MCF 10A (cell line): ENCODE measurements at regions of chr20 and their contacts with region 1.

Region 1: DNA sequence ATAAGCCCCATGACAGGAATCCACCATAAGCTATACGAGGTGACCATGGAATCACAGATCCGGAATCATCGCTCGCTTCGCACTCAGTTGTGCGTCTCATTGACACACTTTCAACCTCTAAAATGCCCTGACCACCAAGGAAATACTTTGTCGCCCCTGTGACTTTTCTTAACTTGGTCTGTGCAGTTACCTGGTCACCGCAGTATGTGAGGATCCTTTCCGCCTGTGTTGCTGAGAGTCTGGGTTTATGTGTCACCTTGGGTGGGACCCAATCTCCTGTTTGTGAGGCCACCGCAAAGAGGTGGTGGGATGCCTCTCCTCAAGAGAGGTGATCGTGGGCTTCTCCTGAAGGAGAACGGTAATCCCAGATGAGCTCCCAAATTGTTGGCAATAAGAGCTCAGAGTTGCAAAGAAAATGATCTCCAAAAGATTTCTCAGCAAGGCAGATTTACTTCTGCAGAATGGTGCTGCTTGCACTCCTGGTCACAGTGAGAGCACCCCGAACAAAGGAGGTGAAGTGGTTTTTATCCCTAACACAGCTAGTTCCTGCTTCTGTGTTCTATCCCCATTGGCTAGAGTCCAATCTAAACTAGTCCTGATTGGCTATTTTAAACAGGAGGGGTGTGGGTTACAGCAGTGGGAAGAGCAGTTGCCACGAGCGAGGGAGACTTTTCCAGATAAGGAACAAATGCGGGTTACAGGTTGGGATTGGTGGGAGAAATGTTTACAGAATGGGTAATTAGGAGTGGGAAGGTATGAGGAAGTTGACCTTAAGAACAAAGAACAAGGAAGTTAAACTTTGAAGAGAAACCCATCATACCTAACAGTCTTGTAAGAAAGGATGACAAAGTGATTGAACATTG is 9.1 kb upstream of the ZNFX1 start:
- DNase-seq: peak; percentile 23
- H3K4me3 Mint-ChIP-seq: peak overlapping the region; percentile 37
- H3K27ac Mint-ChIP-seq: no peak overlapping the region
- H3K4me1 Mint-ChIP-seq: peaks cover 67% of the 10 kb centered on the region
- H3K27me3 Mint-ChIP-seq: no peaks in the 10 kb centered on the region
- CTCF ChIP-seq: no peak

Region 2: DNA sequence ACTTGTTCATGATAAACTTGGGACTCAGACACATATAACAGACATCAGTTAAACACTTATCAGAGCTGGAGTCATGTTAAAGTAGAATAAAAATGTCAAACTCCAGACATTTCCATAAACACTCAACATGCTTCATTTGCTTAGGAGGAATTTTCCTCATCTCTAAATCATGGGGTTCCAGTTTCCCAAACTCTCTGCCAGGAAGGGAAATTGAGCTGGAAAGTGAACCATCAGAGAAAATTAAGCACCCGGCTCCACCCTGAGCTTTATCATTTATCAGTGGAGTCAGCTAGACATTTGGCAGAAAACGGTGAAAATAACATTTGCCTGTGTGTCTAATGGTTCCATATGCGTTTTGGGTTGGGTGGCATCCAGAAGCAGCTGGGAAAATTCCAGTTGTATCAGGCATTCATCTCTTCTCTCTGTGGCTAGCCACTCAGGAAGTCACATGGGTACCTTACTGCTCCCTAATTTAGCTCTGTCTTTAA is 16.2 kb after region 1 on chr20:
- CTCF ChIA-PET with region 1: interaction called, 3 read pairs
- POLR2A ChIA-PET with region 1: interaction called, 21 read pairs
- intact Hi-C with region 1: no loop called
- DNase-seq: no peak
- H3K4me3 Mint-ChIP-seq: no peak overlapping the region
- H3K27ac Mint-ChIP-seq: no peak overlapping the region
- H3K4me1 Mint-ChIP-seq: no peaks in the 10 kb centered on the region
- H3K27me3 Mint-ChIP-seq: no peaks in the 10 kb centered on the region
- CTCF ChIP-seq: no peak